ENCODE measurements at regions of chr11 and their contacts with region 1.

Region 1: DNA sequence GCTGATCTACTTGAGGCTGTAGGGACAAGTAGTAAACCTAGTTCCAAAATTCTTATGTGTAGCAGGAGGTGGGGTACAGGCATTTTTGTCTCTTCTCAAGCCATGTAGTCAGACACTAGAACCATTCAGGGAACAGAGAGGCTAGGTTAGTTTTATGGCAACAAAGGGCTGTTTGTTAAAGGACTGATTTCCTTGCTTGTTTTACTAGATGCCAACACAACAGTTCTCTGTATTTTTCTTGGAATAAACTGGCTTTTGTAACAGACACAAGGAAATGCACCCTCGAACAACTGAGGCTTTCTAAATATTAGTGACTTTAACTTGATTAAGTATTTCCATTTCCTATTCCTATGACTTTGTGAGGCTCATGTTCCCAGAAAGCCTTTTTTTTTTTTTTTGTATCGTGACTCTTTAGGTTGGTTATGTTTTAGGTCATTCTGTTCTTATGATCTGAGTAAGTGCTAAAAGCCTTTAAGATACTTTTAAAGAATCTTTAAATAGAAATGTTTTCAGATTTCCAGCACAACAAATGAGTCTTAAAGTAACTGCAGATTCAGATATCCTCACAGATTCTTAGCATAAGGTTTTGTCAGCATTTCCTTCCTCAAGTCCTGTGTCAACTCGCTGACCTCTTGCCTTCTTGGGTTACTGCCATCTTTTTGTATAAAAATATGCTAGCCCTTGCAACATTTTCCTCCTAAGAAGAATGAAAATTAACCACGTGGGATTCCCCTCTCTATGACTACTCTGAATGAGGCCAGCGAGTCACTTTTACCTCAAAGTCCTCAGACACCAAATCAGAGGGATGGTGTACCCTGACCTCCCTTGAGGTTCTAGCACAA is 92.5 kb downstream of the CCDC83 start:
- DNase-seq: peak; percentile 6
- H3K4me3 Mint-ChIP-seq: peak overlapping the region; percentile 7
- H3K27ac Mint-ChIP-seq: peak overlapping the region; percentile 93
- H3K4me1 Mint-ChIP-seq: peaks cover 60% of the 10 kb centered on the region
- H3K27me3 Mint-ChIP-seq: no peaks in the 10 kb centered on the region

Region 2: DNA sequence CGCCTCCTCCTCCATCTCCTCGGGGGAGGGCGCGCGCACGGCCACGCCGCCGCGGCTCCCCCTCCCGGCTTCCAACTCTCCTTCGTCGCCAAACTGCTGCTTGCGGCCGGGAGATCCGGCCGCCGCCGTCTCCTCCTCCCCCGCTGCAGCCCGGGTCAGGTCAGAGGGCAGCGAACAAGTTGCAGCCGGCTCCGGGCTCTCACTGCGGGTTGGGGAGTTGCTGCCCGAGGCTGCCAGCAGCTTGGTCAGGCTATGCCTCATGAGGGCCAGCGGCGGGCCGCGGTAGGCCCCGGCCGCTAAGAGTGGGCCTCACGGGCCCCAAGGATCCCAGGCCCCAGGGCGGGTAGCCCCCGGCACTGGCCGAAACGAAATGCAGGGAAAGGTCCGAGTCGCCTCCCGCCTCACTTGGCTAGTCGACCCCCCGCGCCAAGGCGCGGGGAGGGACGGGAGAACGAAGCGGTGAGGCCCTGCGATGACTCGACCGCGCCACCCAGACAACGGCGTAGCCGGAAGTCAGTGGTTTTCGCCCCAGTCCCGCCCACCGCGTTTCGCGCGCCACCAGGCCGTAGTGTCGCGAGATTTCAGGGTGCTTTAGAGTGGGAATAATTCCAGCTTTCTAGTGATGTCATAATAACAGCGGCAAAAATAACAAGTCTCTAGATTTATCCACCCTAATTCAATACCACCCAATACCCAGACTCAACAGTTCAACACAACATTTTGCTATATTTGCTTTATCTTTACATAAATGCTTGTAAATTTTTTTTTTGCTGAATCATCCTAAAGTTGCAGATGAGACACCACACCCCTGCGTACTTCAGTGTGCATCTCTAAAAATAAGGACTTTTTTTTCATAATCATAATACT is 282.8 kb before region 1 on chr11 and contains the start of gene CREBZF:
- intact Hi-C with region 1: loop called (anchors 2 kb)
- DNase-seq: peak; percentile 94
- H3K4me3 Mint-ChIP-seq: peak within 1 kb of the TSS; percentile 99
- H3K27ac Mint-ChIP-seq: peak within 1 kb of the TSS; percentile 97
- H3K4me1 Mint-ChIP-seq: peaks cover 51% of the 10 kb centered on the region
- H3K27me3 Mint-ChIP-seq: no peaks in the 10 kb centered on the region
- total RNA-seq, gene CREBZF: 52.0 and 55.9 TPM in 2 replicates

Region 3: GRCh38 chr11:85826116-85826855 is 121.4 kb before region 1 on chr11:
- intact Hi-C with region 1: loop called (anchors 1 kb)
- DNase-seq: no peak
- H3K4me3 Mint-ChIP-seq: peak overlapping the region; percentile 1
- H3K27ac Mint-ChIP-seq: peak overlapping the region; percentile 87
- H3K4me1 Mint-ChIP-seq: peaks cover 74% of the 10 kb centered on the region
- H3K27me3 Mint-ChIP-seq: no peaks in the 10 kb centered on the region

Region 4: DNA sequence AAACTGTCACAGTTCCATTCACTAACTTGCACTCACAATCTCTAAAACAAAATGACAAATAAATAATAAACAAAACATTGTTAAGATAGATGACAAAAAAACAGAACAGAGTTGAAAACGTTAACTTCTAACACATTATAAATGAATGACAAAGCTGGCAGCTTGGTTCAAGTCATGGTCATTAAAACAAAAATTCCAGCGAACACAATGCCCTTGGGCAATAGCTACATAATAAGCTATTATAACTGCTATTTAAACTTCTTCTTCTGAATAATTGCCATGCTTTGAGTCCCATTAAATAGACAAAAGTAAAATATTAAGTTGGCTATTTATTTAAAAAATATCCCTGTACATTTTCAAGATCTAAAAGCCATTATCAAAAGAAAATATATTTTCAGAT is 66.6 kb after region 1 on chr11:
- intact Hi-C with region 1: no loop called
- DNase-seq: no peak
- H3K4me3 Mint-ChIP-seq: no peak overlapping the region
- H3K27ac Mint-ChIP-seq: no peak overlapping the region
- H3K4me1 Mint-ChIP-seq: peaks cover 34% of the 10 kb centered on the region
- H3K27me3 Mint-ChIP-seq: no peaks in the 10 kb centered on the region

Region 5: DNA sequence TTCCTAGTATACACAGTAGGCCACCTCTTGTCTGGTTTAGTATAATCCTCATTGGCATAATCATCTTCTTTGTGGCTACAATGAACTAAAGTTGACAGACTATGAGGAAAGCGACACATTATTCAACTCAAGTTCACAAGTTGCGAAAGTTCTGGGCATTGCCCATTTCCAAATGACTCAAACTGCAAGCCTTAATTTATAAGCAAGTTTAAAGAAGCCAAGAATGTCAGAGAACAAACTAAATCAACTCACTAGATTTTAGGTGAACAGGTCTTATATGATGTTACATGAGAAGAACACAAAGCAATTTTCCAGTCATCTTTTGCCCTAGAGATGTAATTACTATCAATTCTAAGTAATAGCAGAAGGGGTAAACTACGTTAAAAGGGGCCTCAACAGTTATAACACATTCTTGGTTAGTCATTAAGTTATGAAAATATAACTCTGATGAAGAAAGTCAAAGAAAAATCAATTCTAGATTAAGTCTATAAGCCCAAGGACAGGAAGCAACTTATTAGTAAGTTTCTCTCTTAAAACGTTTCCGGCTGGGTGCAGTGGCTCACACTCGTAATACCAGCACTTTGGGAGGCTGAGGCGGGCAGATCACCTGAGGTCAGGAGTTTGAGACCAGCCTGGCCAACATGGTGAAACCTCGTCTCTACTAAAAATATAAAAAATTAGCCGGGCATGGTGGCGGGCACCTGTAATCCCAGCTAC is 99.8 kb after region 1 on chr11:
- intact Hi-C with region 1: loop called (anchors 1 kb)
- DNase-seq: no peak
- H3K4me3 Mint-ChIP-seq: peak overlapping the region; percentile 69
- H3K27ac Mint-ChIP-seq: peak overlapping the region; percentile 91
- H3K4me1 Mint-ChIP-seq: peaks cover 88% of the 10 kb centered on the region
- H3K27me3 Mint-ChIP-seq: no peaks in the 10 kb centered on the region

Region 6: GRCh38 chr11:86068951-86069407 is 121.3 kb after region 1 on chr11 and contains the start of gene PICALM:
- intact Hi-C with region 1: no loop called
- DNase-seq: peak; percentile 97
- H3K4me3 Mint-ChIP-seq: peak within 1 kb of the TSS; percentile 92
- H3K27ac Mint-ChIP-seq: peak within 1 kb of the TSS; percentile 97
- H3K4me1 Mint-ChIP-seq: peaks cover 33% of the 10 kb centered on the region
- H3K27me3 Mint-ChIP-seq: no peaks in the 10 kb centered on the region
- total RNA-seq, gene PICALM: 174 and 177 TPM in 2 replicates

Region 7: DNA sequence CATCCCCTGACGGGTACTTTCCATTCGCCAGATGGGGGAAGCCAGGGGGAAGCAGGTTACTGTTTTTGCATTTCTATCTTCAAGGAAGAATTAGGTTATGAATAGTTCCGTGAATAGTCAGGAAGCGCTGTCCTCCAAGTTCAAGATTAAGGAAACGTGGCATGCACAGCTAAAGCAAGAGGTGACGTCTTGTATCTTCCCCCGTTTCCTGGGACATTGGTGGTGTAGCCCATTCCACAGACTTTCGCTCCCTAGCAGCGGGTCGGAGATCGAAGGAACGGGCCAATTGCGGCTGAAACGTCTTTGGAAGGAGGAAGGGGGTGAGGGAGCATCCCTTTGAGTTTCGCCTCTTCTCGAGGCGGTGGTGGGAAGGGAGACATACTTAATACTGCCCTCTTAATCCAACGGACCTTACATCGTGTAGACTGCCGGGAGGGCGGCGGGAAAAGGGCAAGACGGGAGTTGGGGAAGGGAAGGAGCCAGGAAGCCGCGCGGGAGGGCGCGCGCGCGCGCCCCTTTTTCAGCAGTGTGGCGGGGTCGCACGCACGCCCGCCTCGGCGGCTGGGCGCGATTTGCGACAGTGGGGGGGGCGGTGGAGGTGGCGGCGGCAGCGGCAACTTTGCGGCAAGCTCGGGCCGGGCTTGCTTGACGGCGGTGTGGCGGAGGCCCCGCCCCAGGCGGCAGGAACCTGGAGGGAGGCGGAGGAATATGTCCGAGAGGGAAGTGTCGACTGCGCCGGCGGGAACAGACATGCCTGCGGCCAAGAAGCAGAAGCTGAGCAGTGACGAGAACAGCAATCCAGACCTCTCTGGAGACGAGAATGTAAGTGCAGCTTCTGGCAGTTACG is 297.1 kb after region 1 on chr11 and contains the start of gene EED:
- intact Hi-C with region 1: loop called (anchors 2 kb)
- DNase-seq: peak; percentile 93
- H3K4me3 Mint-ChIP-seq: no peak within 1 kb of the TSS
- H3K27ac Mint-ChIP-seq: no peak within 1 kb of the TSS
- H3K4me1 Mint-ChIP-seq: peaks cover 43% of the 10 kb centered on the region
- H3K27me3 Mint-ChIP-seq: no peaks in the 10 kb centered on the region
- total RNA-seq, gene EED: 279 and 294 TPM in 2 replicates

Region 8: DNA sequence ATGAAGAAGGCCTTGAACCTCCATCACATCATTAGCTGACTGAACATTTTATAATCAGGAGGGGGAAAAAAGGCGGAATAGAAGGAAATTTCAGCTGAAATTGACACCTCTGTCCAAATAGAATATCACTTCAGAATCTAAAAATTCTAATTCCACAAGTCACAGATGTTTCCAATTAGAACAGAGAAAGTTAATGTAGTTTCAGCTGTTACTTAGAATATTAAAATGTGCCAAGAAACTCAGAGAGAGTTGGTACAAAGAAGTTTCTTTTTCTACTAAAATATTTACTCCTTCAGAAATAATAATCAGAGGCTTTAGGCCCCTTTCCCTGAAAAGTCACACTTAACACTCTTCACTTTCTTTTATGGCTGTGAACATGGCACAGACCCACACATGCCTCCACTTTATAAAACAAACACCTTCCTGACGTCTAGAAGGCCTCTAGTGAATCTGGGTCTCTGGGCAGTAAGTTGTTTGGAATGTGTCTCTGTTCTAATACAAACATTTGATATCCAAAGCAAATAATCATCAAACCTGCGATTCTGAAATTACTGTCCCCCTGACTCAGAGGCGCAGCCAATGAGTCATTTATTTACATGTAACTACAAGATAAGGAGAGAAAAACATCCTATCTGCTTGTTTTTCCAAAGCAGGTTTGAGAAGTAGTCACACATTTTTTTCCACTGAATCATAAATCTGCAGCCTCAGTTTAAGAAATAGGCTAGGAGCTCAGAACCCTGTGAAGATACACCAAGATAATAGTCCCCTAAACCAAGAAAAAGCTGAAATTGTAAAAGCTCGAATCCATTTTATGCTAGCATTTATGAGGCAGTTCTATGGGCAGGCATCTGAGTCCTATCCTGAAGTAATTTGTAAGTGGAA is 576.3 kb after region 1 on chr11:
- intact Hi-C with region 1: loop called (anchors 5 kb)
- DNase-seq: no peak
- H3K4me3 Mint-ChIP-seq: peak overlapping the region; percentile 56
- H3K27ac Mint-ChIP-seq: peak overlapping the region; percentile 90
- H3K4me1 Mint-ChIP-seq: peaks cover 36% of the 10 kb centered on the region
- H3K27me3 Mint-ChIP-seq: peaks cover 2% of the 10 kb centered on the region

Region 9: DNA sequence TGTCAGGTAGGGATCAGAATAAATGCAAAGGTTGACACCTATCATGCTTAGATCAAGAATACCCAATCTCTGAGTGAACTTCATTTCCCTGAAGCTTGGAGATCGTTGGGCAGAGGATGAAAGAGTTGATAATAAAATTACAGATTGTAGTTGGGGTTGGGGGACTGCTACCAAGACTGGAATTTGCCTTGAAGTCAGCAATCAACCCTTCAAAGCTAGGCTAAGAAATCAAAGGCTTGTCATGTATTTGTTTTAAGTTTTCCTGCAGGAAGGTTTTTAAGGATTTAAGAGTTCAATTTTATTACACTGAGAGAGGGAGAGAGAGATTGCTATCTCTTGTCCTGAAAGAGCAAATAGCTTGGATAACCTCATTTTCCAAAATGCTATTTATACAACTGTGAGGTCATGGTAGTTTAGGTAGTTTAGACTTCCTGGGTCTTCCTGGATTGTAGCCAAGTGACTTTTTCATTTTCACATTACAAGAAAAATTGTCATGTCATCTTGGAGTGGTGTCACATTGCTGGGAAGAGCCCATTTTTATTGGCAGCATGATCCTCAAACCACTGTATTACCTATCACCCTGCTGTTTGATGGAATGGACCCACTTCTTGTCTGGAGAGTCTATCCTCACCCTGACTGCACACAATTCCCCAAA is 842.5 kb after region 1 on chr11:
- intact Hi-C with region 1: no loop called
- DNase-seq: no peak
- H3K4me3 Mint-ChIP-seq: no peak overlapping the region
- H3K27ac Mint-ChIP-seq: no peak overlapping the region
- H3K4me1 Mint-ChIP-seq: no peaks in the 10 kb centered on the region
- H3K27me3 Mint-ChIP-seq: peaks cover 48% of the 10 kb centered on the region

Measured in activated T-helper 1 cell treated with anti-CD3 and anti-CD28 coated beads, Interleukin-12 subunit alpha, Interleukin-12 subunit beta, Interleukin-2, Interleukin-4 antibody, amounts not matched to agents 30 ng/mL and 10 ng/mL and 1 ng/mL, durations not matched to agents 14 hours and 24 hours and 36 hours (primary cell).